ENCODE measurements at regions of chr22 and their contacts with region 1.

Region 1: GRCh38 chr22:35589071-35589952 is 27.8 kb downstream of the MB start:
- DNase-seq: no peak
- H3K4me3 ChIP-seq: no peak overlapping the region
- H3K27ac ChIP-seq: no peak overlapping the region
- H3K4me1 ChIP-seq: no peaks in the 10 kb centered on the region
- H3K27me3 ChIP-seq: no peaks in the 10 kb centered on the region
- CTCF ChIP-seq: no peak
- POLR2A ChIP-seq: no peak

Region 2: DNA sequence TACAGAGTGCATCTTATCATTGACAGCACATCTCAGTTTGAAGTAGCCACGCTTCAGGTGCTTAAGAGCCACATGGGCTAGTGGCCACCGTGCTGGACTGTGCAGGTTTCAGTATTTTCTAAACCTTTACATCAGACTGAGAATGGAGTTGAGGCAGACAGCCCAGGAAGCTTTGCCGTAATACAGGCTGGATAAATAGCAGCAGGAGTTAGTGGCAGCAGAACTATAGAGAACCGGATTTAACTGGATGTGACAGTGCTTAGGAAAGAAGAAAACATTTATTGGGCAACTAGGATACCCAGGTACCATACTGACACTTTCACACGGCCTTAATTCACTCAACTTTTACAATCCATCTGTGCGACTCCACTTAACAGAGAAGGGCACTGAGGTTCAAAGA is 1814.5 kb before region 1 on chr22:
- intact Hi-C with region 1: loop called (anchors 5 kb)
- DNase-seq: no peak
- H3K4me3 ChIP-seq: no peak overlapping the region
- H3K27ac ChIP-seq: no peak overlapping the region
- H3K4me1 ChIP-seq: peaks cover 7% of the 10 kb centered on the region
- H3K27me3 ChIP-seq: no peaks in the 10 kb centered on the region
- CTCF ChIP-seq: no peak
- POLR2A ChIP-seq: no peak

Region 3: GRCh38 chr22:35350539-35351503 is 238.5 kb before region 1 on chr22:
- intact Hi-C with region 1: loop called (anchors 5 kb)
- DNase-seq: peak in 1 of 2 donors; percentile 97
- H3K4me3 ChIP-seq: peak overlapping the region; percentile 48 to 57
- H3K27ac ChIP-seq: peak overlapping the region; percentile 86
- H3K4me1 ChIP-seq: peaks cover 37% of the 10 kb centered on the region
- H3K27me3 ChIP-seq: no peaks in the 10 kb centered on the region
- CTCF ChIP-seq: peak; percentile 84 to 94 (median 85)
- POLR2A ChIP-seq: peak in 1 of 2 donors; percentile 34

Region 4: DNA sequence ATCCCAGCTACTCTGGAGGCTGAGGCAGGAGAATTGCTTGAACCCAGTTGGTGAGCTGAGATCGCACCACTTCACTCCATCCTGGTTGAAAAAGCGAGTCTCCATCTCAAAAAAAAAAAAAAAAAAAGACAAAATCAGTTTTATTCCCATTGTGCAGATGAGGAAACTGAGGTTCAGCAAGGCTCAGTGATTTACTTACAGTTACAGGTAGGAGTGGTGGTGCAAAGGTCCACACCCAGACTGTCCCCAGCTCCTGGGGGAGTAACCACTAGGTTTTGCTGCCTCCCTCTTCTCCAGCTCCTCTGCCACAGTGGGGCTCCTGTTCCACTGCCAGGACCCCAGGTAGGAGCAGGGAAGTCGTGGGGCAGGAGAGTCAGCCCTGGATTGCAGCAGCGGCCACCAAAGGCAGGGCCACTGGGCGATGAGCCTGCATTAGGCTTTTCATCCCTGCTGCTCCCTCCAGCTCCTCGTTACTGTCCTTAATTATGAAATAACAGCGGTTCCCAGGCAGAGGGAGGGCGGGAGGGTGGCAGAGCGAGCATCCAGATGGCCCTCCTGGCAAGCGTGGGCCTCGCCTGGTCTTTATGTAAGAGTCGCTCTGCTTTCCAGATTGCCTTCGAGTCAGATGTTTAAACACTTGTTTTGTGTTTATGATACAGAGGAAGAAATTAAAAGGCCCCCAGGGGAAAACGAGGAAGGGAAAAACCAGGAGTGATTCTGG is 64.2 kb before region 1 on chr22:
- intact Hi-C with region 1: no loop called
- DNase-seq: no peak
- H3K4me3 ChIP-seq: no peak overlapping the region
- H3K27ac ChIP-seq: peak overlapping the region; percentile 59
- H3K4me1 ChIP-seq: peaks cover 8% of the 10 kb centered on the region
- H3K27me3 ChIP-seq: no peaks in the 10 kb centered on the region
- CTCF ChIP-seq: no peak
- POLR2A ChIP-seq: no peak

Measured in vagina (tissue), 2 donors.